ENCODE measurements at regions of chr7 and their contacts with region 1.

Region 1: GRCh38 chr7:156892821-156893706 is at the start of gene LMBR1:
- DNase-seq: peak; percentile 98 to 99 (median 98)
- ATAC-seq: peak; percentile 86
- H3K4me3 ChIP-seq: peak within 1 kb of the TSS; percentile 77
- H3K27ac ChIP-seq: peak within 1 kb of the TSS; percentile 89
- H3K4me1 ChIP-seq: peaks cover 13 to 30% of the 10 kb centered on the region in 2 experiments
- H3K27me3 ChIP-seq: no peaks in the 10 kb centered on the region
- CTCF ChIP-seq: peak; percentile 37 to 78 (median 74)
- EP300 ChIP-seq: peak; percentile 35; the same call in 1 of the 2 replicates
- POLR2A ChIP-seq: peak; percentile 94
- RAD21 ChIP-seq: peak; percentile 14 to 17; a peak in 2 of 4 replicates
- polyA plus RNA-seq, gene LMBR1: 7.7 to 9.6 TPM

Region 2: DNA sequence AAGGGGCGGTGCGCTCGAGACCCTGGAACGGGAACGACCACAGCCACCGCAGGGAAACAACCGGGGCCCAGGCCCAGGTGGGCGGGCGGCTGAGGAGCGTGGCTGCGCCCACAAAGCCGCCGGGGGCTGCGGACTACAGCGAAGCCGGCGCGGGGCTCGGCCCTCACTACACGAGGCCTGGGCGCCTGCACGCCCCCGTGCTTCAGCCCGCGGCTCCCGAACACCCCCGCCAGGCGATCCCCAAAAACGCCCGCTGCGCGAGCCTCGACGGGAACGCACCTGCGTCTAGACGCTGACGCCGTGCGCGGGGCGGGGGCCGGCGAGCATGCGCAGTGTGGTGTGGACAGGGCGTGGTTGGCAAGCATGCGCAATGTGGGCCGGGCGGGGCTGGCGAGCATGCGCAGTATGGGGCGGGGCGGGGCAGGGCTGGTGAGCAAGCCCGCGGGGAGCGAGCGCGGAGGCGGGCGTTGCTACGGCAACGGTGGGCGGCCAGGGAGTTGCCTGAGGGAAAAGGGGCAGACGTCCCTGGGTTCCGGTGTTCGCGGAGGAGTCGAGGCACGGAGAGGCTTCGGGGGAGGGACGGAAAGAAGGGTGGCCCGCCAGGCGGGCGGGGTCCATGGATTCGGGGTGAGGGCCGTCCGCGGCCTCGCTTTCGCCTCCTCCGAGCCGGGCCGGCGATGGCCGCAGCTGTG is 252.7 kb before region 1 on chr7 and contains the start of gene RNF32:
- CTCF ChIA-PET with region 1: no interaction called
- POLR2A ChIA-PET with region 1: no interaction called
- in situ Hi-C with region 1: no loop called
- intact Hi-C with region 1: loop called (anchors 5 kb)
- DNase-seq: peak; percentile 100
- ATAC-seq: peak; percentile 80
- H3K4me3 ChIP-seq: peak within 1 kb of the TSS; percentile 71
- H3K27ac ChIP-seq: peak within 1 kb of the TSS; percentile 92
- H3K4me1 ChIP-seq: peaks cover 5 to 20% of the 10 kb centered on the region in 2 experiments; a peak in 4 of 5 replicates
- H3K27me3 ChIP-seq: no peaks in the 10 kb centered on the region
- CTCF ChIP-seq: peak in 1 of 3 experiments; percentile 28; a peak in 2 of 6 replicates
- EP300 ChIP-seq: peak; percentile 9; the same call in 1 of the 2 replicates
- POLR2A ChIP-seq: peak; percentile 90
- RAD21 ChIP-seq: 0 out of 4 replicates have a peak, but pooled peaks of 1 of the 2 experiments have one; percentile 3
- polyA plus RNA-seq, gene RNF32: 3.2 to 3.7 TPM

Region 3: GRCh38 chr7:156827587-156828203 is 65.4 kb before region 1 on chr7:
- CTCF ChIA-PET with region 1: no interaction called
- POLR2A ChIA-PET with region 1: no interaction called
- in situ Hi-C with region 1: no loop called
- intact Hi-C with region 1: loop called (anchors 5 kb)
- DNase-seq: peak in 2 of 4 experiments; percentile 38 to 43
- ATAC-seq: peak; percentile 75
- H3K4me3 ChIP-seq: no peak overlapping the region
- H3K27ac ChIP-seq: no peak overlapping the region
- H3K4me1 ChIP-seq: no peaks in the 10 kb centered on the region; a peak in 1 of 5 replicates
- H3K27me3 ChIP-seq: no peaks in the 10 kb centered on the region
- CTCF ChIP-seq: peak; percentile 46 to 74 (median 50); a peak in 5 of 6 replicates
- EP300 ChIP-seq: no peak
- POLR2A ChIP-seq: no peak
- RAD21 ChIP-seq: peak; percentile 62 to 65

Region 4: GRCh38 chr7:156842740-156843140 is 50.3 kb before region 1 on chr7:
- CTCF ChIA-PET with region 1: interaction called, 7 read pairs
- POLR2A ChIA-PET with region 1: interaction called, 3 read pairs
- in situ Hi-C with region 1: no loop called
- intact Hi-C with region 1: loop called (anchors 2 kb)
- DNase-seq: peak; percentile 33 to 64 (median 55)
- ATAC-seq: peak; percentile 82
- H3K4me3 ChIP-seq: 0 out of 2 replicates have a peak overlapping the region, but pooled peaks have one; percentile 1
- H3K27ac ChIP-seq: peak overlapping the region; percentile 77
- H3K4me1 ChIP-seq: peaks cover 27 to 38% of the 10 kb centered on the region in 2 experiments
- H3K27me3 ChIP-seq: no peaks in the 10 kb centered on the region
- CTCF ChIP-seq: no peak
- EP300 ChIP-seq: no peak
- POLR2A ChIP-seq: no peak
- RAD21 ChIP-seq: no peak

Region 5: GRCh38 chr7:156865493-156865892 is 27.6 kb before region 1 on chr7:
- CTCF ChIA-PET with region 1: no interaction called
- POLR2A ChIA-PET with region 1: no interaction called
- in situ Hi-C with region 1: no loop called
- intact Hi-C with region 1: no loop called
- DNase-seq: no peak
- ATAC-seq: no peak
- H3K4me3 ChIP-seq: no peak overlapping the region
- H3K27ac ChIP-seq: no peak overlapping the region
- H3K4me1 ChIP-seq: peaks cover 3 to 5% of the 10 kb centered on the region in 2 experiments; a peak in 3 of 5 replicates
- H3K27me3 ChIP-seq: no peaks in the 10 kb centered on the region
- CTCF ChIP-seq: no peak
- EP300 ChIP-seq: no peak
- POLR2A ChIP-seq: no peak
- RAD21 ChIP-seq: no peak